Ascending aorta (tissue), 2 donors: ENCODE measurements at regions of chr2 and their contacts with region 1.

Region 1: DNA sequence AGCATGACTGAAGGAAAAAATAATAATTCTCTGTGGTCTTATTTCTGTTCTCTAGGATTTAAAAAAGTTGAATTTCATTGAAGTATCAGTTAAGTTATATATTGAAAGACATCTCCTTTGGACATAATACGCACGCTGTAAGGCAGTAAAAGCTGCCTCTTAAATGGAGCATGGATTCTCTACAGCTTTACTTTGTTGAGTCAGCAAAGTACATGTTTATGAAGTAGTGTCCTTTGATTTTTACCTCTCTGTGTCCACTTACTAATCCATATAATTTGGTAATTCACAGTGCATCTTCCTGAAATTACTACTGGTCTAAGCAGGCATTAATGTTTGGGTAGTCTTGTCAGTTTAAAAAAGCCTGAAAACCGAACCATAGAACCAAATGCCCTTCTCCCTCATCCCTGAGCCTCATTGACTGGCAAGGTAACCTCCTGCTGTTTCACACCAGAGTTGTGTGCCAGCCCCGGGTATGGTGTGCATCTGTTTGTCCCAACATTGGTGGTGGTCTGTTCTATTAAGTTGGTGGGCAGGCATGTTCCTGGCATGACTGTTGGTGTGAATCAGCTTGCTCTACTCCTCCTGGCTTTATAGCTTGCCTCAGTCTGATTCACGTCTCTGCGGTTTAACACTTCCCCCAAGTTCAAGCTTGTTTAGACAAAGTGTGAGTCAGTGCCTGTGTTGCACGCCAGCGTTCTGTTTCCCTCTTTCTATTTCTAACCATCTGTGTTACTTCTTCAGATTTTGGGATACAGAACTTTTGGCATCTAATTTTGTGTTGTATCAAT is 71.0 kb upstream of the ITM2C start:
- DNase-seq: peak; percentile 73 to 92
- H3K4me3 ChIP-seq: no peak overlapping the region
- H3K27ac ChIP-seq: peak overlapping the region; percentile 71 to 89
- H3K4me1 ChIP-seq: peaks cover 14 to 28% of the 10 kb centered on the region in 2 donors
- H3K27me3 ChIP-seq: no peaks in the 10 kb centered on the region
- CTCF ChIP-seq: no peak

Region 2: DNA sequence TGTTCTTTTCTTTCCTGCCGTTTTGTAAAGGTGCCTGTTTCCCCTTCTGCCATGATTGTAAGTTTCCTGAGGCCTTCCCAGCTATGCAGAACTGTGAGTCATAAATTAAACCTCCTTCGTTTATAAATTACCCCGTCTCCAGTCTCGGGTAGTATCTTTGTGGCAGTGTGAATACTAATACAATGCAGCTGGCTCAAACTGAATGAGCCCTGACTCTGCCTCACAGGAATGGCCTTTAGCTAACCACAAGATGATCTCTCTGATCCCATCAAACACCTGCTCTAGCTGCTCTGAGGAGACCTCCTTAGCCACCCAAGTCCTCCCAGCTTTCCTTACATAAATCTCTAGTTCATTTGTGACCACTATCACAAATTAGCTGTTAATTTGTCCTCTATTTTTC is 122.6 kb before region 1 on chr2:
- intact Hi-C with region 1: no loop called
- DNase-seq: no peak
- H3K4me3 ChIP-seq: no peak overlapping the region
- H3K27ac ChIP-seq: no peak overlapping the region
- H3K4me1 ChIP-seq: no peaks in the 10 kb centered on the region
- H3K27me3 ChIP-seq: no peaks in the 10 kb centered on the region
- CTCF ChIP-seq: no peak

Region 3: DNA sequence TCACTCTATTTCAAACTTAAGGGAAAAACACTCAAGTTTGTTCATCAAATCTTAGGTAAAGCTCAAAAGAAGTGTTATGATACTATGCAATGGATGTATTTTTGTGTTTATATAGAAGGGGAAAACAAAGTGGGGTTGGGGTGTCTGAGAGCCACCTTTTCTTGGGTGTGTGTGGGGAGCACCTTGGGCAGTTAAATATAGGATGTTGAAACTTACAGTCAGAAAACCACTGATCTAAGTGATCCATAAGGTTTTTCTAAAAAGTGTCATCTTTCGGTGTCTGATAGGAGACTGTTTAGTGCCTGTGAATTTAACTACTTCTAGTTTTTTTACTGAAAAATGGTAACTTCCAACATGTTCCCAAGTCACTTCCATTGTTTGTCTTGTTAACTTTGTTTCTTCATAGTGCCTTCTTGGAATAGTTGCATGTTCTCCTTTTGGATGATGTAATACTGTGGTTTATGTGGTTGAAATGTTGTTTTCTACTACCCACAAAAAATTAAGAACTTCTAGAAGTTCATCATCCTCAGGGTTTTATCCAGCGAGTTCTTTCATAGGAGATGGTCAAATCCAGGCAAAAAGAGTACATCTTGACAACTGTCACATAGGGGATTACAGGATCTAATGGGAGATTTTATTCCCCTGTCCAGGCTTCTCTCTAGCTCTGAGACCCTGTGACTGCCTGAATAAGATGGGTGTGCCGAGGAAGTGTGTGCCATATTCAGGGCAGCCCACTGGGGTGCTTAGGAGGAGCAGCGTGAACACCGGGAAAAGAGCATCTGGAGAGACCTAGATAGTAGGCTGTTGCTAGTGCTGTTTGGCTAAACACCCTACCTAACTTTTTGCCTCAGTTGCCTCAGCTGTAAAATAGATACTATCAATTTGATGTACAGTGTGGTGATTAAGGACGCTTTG is 34.9 kb before region 1 on chr2:
- intact Hi-C with region 1: loop called (anchors 5 kb)
- DNase-seq: no peak
- H3K4me3 ChIP-seq: no peak overlapping the region
- H3K27ac ChIP-seq: peak overlapping the region; percentile 62 to 70
- H3K4me1 ChIP-seq: peaks cover 10 to 32% of the 10 kb centered on the region in 2 donors
- H3K27me3 ChIP-seq: no peaks in the 10 kb centered on the region
- CTCF ChIP-seq: no peak

Region 4: DNA sequence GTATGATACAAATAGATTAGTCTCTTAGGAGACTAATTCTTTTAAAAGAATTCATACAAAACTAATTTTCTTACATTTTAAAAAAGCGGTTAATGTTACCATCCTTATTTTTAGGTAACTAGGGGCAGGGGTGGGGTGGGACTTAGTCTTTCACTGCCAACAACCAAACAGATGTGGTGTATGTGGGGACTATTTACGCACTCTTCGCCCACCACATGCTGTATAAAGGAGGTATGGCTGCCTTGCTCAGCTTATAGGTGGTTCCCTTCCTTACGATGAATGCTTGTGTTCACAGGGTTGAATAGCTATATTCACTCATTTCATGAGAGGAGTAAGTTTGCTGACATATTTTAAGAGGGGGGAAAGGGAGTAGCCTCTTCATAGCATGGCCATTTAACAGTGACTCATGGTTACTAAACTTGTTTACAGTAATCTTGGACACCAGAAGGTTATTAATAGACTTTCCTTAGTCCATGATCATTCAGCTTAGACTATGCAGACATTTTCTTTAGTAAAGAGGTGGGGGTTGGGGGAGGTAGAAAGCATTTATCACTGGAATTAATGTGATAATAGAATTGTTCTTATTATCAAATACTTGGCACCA is 19.3 kb before region 1 on chr2:
- intact Hi-C with region 1: loop called (anchors 2 kb)
- DNase-seq: no peak
- H3K4me3 ChIP-seq: no peak overlapping the region
- H3K27ac ChIP-seq: peak overlapping the region in 1 of 2 donors; percentile 42
- H3K4me1 ChIP-seq: peaks cover 0 to 12% of the 10 kb centered on the region in 2 donors
- H3K27me3 ChIP-seq: no peaks in the 10 kb centered on the region
- CTCF ChIP-seq: no peak